CD8-positive, alpha-beta T cell (primary cell): ENCODE measurements at regions of chr1 and their contacts with region 1.

Region 1: GRCh38 chr1:211578640-211579433 is at the start of gene SLC30A1:
- DNase-seq: peak; percentile 98 to 100 (median 99)
- ATAC-seq: peak; percentile 92
- H3K4me3 ChIP-seq: peak within 1 kb of the TSS; percentile 84 to 93
- H3K4me3 Mint-ChIP-seq: peak within 1 kb of the TSS; percentile 93
- H3K27ac ChIP-seq: peak within 1 kb of the TSS; percentile 56 to 59
- H3K27ac Mint-ChIP-seq: peak within 1 kb of the TSS; percentile 95
- H3K4me1 ChIP-seq: peaks cover 33% of the 10 kb centered on the region
- H3K4me1 Mint-ChIP-seq: peaks cover 51% of the 10 kb centered on the region
- H3K27me3 ChIP-seq: no peaks in the 10 kb centered on the region
- H3K27me3 Mint-ChIP-seq: no peaks in the 10 kb centered on the region
- CTCF ChIP-seq: no peak
- total RNA-seq, gene SLC30A1: 9.7 to 9.8 TPM

Region 2: DNA sequence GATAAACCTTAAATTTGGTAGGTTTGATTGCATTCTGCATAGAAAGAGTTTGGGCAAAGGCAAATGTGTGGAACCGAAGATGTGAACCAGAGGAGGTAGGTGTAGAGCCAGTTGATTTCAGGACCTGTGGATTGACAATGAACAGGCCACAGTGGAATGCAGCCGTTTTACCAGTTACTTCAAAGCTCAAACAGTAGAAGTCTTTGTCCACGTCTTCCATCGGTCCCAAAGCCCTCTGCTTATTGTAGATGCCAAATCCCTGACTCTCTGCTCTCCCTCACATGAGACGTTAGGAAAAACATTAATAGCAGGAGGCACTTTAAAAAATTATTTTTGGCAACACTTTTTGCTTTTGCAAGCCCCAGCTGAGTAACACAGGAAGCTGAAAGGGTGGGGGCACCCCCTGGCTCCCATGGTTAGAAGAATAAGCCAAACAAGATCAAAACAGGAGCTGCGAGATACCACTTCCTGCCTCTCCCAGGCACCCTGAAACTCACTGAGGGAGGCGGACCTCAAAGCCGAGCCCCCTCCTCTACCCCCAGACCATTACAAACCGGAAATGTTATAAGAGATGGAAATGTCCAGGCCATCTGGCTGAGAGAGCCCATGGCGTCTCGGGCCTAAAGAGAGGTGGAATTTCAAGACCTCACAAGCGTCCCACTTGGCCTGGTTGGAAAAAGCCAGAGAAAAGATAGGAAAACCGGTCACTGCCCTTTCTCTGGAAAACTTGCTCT is 1809.5 kb before region 1 on chr1:
- CTCF ChIA-PET with region 1: no interaction called
- POLR2A ChIA-PET with region 1: no interaction called
- intact Hi-C with region 1: loop called in 1 of 2 experiments (anchors 5 kb)
- DNase-seq: peak; percentile 33 to 87 (median 76)
- ATAC-seq: peak; percentile 72
- H3K4me3 ChIP-seq: peak overlapping the region; percentile 72 to 88
- H3K4me3 Mint-ChIP-seq: no peak overlapping the region
- H3K27ac ChIP-seq: peak overlapping the region; percentile 75 to 76
- H3K27ac Mint-ChIP-seq: no peak overlapping the region
- H3K4me1 ChIP-seq: peaks cover 68% of the 10 kb centered on the region
- H3K4me1 Mint-ChIP-seq: peaks cover 44% of the 10 kb centered on the region
- H3K27me3 ChIP-seq: no peaks in the 10 kb centered on the region
- H3K27me3 Mint-ChIP-seq: no peaks in the 10 kb centered on the region
- CTCF ChIP-seq: no peak

Region 3: DNA sequence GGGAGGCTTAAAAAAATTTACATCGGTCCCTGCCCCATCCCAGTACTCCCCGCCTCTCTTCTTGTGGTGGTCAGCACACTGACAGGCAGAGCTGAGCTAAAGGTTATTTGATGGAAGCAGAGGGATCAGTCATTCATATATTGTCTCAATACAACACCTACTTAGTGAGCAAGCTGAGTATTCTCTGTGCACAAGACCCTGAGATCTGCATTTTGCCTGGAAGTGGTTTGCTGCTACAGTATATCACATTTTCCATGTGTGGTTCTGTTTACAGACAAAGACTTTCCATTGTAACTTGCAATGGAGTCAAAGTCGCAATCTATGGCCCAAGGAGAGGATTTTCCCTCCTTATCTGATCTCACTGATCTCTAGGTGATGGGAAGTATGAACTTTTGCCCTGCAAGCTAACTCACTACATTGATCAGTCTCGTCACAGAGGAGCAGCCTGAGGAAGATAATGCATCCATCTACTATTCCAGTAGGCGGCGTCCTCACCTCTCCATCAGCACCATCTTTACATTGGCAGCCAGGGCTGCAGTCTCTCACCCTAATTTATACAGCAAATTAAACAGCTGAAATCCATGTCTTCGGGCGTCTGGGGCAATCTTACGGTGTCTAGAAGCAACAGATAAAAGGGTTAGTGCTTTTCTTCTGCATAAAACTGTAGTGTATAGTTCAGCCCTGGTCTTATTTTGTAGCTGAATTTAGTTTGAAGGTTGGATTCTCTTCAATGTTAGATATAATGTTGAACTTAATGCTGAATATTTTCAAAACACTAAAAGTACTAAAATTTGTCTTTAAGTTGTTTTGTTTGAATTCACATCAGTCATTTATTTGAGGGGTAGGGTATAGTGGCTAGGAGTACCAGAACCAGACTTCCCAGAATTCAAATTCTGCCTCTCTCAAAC is 255.4 kb before region 1 on chr1:
- CTCF ChIA-PET with region 1: no interaction called
- POLR2A ChIA-PET with region 1: no interaction called
- intact Hi-C with region 1: loop called (anchors 1 to 5 kb)
- DNase-seq: peak; percentile 41 to 85 (median 66)
- ATAC-seq: peak; percentile 69
- H3K4me3 ChIP-seq: no peak overlapping the region
- H3K4me3 Mint-ChIP-seq: no peak overlapping the region
- H3K27ac ChIP-seq: no peak overlapping the region
- H3K27ac Mint-ChIP-seq: no peak overlapping the region
- H3K4me1 ChIP-seq: peaks cover 10% of the 10 kb centered on the region
- H3K4me1 Mint-ChIP-seq: peaks cover 29% of the 10 kb centered on the region
- H3K27me3 ChIP-seq: no peaks in the 10 kb centered on the region
- H3K27me3 Mint-ChIP-seq: no peaks in the 10 kb centered on the region
- CTCF ChIP-seq: peak; percentile 81

Region 4: DNA sequence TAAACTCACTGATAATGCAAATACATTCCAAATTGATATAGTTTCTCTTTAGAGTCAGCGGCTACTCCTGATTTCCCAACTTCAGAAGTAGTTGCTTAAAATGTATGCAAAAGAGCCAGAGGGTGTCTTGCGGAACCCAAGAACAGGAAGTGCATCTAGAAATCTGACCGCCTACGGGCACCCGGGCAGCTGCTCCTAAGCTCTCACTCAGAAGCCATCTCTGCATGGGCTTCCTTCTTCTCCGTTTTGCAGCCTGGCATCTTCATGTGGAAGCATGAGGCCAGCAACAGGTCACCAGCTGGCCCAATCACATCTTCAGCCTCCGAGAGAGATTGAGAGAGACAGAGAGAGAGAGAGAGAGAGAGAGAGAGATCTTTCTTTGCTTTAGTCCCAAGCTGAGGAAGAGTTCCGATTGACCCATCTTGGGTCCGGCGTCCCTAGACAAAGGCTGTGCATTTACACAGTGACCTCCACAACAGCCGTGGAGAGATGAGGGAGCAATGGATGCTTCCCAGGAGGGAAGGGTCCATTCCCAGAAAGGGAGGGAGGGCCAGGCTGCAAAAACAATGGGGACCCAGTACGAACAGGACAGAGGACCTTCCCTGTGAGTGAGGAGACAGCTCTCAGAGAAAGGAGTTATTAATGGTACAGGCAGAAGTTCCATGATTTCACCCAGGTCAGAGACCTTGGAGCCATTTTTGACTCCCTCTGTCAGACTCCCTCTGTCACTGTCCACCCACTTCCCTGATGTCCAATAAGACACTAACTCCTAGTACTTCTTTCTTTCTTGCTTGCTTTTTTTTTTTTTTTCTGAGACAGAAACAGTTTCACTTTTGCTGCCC is 28.3 kb after region 1 on chr1:
- CTCF ChIA-PET with region 1: interaction called, 4 read pairs
- POLR2A ChIA-PET with region 1: interaction called, 15 read pairs
- intact Hi-C with region 1: loop called in 1 of 2 experiments (anchors 5 kb)
- DNase-seq: peak in 4 of 9 experiments; percentile 15 to 53 (median 42)
- ATAC-seq: peak; percentile 38
- H3K4me3 ChIP-seq: peak overlapping the region; percentile 25 to 27
- H3K4me3 Mint-ChIP-seq: peak overlapping the region; percentile 77
- H3K27ac ChIP-seq: peak overlapping the region in 1 of 2 experiments; percentile 16
- H3K27ac Mint-ChIP-seq: peak overlapping the region; percentile 84
- H3K4me1 ChIP-seq: peaks cover 6% of the 10 kb centered on the region
- H3K4me1 Mint-ChIP-seq: peaks cover 15% of the 10 kb centered on the region
- H3K27me3 ChIP-seq: no peaks in the 10 kb centered on the region
- H3K27me3 Mint-ChIP-seq: peaks cover 9% of the 10 kb centered on the region
- CTCF ChIP-seq: no peak

Region 5: GRCh38 chr1:211675230-211676105 is 96.6 kb after region 1 on chr1 and contains the start of gene NEK2:
- CTCF ChIA-PET with region 1: interaction called, 4 read pairs
- POLR2A ChIA-PET with region 1: no interaction called
- intact Hi-C with region 1: loop called (anchors 1 to 5 kb)
- DNase-seq: peak; percentile 61 to 92 (median 84)
- ATAC-seq: peak; percentile 89
- H3K4me3 ChIP-seq: peak within 1 kb of the TSS; percentile 67 to 85
- H3K4me3 Mint-ChIP-seq: peak within 1 kb of the TSS; percentile 91
- H3K27ac ChIP-seq: peak within 1 kb of the TSS; percentile 18 to 22
- H3K27ac Mint-ChIP-seq: peak within 1 kb of the TSS; percentile 76
- H3K4me1 ChIP-seq: peaks cover 7% of the 10 kb centered on the region
- H3K4me1 Mint-ChIP-seq: peaks cover 14% of the 10 kb centered on the region
- H3K27me3 ChIP-seq: no peaks in the 10 kb centered on the region
- H3K27me3 Mint-ChIP-seq: no peaks in the 10 kb centered on the region
- CTCF ChIP-seq: no peak
- total RNA-seq, gene NEK2: 0.19 to 0.35 TPM

Region 6: DNA sequence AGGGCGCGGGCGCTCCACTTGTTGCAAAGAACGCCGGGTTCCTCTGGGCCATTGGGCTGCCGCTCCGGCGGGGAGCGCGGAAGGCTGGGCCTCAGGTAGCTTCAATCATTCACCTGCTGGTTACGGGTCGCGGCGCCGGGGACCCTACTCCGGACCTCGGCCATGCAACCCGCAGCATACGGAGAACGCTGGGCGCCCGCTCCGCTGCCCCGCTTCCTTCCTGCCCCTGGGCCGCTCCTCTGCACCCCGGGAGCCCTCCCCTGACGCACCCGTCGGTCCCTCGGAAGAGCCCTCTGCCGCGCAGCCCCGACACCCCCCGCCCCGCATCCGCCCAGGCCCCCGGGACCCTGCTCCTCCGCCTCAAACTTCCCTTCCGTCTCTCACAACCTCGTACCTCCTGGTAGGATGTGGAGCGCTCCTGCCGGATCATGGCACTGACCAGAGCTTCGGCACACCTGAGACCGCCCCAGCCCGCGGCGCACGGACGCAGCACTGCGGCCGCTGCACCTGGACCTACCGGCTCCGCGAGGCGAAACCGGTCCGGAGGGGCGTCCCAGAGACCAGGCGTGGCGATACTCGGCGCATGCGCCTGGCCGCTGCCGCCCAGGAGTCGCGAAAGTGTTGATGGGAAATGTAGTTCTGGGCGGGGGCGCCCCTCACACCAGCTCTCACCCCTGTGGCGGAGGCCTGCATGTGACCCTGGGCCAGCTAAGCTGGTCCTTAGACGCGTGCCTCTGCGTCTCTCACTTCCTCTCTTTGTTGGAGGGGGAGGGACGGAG is 835.7 kb after region 1 on chr1 and contains the start of gene PACC1:
- CTCF ChIA-PET with region 1: no interaction called
- POLR2A ChIA-PET with region 1: no interaction called
- intact Hi-C with region 1: loop called in 1 of 2 experiments (anchors 1 kb)
- DNase-seq: peak; percentile 73 to 95 (median 86)
- ATAC-seq: peak; percentile 91
- H3K4me3 ChIP-seq: peak within 1 kb of the TSS; percentile 80 to 98
- H3K4me3 Mint-ChIP-seq: peak within 1 kb of the TSS; percentile 97
- H3K27ac ChIP-seq: peak within 1 kb of the TSS; percentile 59 to 67
- H3K27ac Mint-ChIP-seq: peak within 1 kb of the TSS; percentile 92
- H3K4me1 ChIP-seq: peaks cover 25% of the 10 kb centered on the region
- H3K4me1 Mint-ChIP-seq: peaks cover 40% of the 10 kb centered on the region
- H3K27me3 ChIP-seq: no peaks in the 10 kb centered on the region
- H3K27me3 Mint-ChIP-seq: no peaks in the 10 kb centered on the region
- CTCF ChIP-seq: no peak
- total RNA-seq, gene PACC1: 2.6 to 2.9 TPM

Region 7: DNA sequence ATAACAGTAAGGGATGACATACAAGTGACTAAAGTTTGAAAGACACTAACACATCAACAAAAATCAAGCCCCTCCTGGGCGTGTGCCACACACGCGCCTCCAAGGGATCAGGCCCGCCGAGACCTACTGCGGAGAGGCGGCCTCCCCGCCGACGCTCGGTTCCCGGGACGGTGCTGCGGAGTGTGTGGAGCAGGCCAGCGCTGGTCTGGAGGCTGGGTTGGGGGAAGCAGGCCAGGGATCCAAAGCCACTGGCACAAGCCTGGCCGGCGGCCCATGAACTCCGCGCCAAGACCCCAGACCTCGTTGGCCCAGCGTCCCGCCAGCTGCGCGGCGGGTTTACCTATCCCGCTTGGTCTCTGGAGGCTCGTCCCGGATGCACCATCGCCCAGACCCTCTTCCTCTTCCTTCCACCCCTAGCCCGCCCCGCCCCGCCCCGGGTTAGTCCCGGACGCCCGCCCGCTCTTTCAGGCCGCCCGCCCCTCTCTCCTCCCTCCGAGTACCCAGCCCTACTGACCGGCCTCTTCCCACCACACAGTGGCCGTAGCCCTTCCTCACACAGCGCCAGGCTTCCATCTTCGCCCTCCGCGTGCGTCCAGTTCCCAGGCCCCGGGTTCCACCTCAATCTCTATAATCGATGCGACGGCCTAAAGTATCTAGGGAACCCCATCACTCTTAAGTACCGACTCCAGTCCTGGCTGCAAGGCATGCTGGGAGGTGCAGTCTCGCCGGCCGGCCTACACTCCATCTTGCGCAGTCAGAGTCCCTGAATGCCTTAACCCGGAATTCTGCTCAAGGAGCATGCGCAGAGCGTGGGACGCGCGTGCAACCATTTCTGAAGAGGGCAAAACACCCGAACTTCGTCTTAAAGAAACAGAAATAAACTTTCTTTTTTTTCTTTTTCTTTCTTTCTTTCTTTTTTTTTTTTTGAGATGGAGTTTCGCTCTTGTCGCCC is 1436.5 kb after region 1 on chr1 and contains the start of gene ANGEL2:
- CTCF ChIA-PET with region 1: no interaction called
- POLR2A ChIA-PET with region 1: no interaction called
- intact Hi-C with region 1: loop called (anchors 5 to 10 kb)
- DNase-seq: peak; percentile 90 to 99 (median 95)
- ATAC-seq: peak; percentile 97
- H3K4me3 ChIP-seq: peak within 1 kb of the TSS; percentile 90 to 96
- H3K4me3 Mint-ChIP-seq: peak within 1 kb of the TSS; percentile 100
- H3K27ac ChIP-seq: peak within 1 kb of the TSS; percentile 90 to 92
- H3K27ac Mint-ChIP-seq: peak within 1 kb of the TSS; percentile 100
- H3K4me1 ChIP-seq: peaks cover 19% of the 10 kb centered on the region
- H3K4me1 Mint-ChIP-seq: peaks cover 40% of the 10 kb centered on the region
- H3K27me3 ChIP-seq: no peaks in the 10 kb centered on the region
- H3K27me3 Mint-ChIP-seq: no peaks in the 10 kb centered on the region
- CTCF ChIP-seq: no peak
- total RNA-seq, gene ANGEL2: 47.4 to 52.5 TPM